ENCODE measurements at regions of chr1 and their contacts with region 1.

Region 1: GRCh38 chr1:112298558-112298957 is 97.5 kb upstream of the CTTNBP2NL start:
- DNase-seq: peak; percentile 76
- H3K4me3 Mint-ChIP-seq: no peak overlapping the region
- H3K27ac Mint-ChIP-seq: no peak overlapping the region
- H3K4me1 Mint-ChIP-seq: peaks cover 5% of the 10 kb centered on the region
- H3K27me3 Mint-ChIP-seq: no peaks in the 10 kb centered on the region
- CTCF ChIP-seq: peak; percentile 83

Region 2: DNA sequence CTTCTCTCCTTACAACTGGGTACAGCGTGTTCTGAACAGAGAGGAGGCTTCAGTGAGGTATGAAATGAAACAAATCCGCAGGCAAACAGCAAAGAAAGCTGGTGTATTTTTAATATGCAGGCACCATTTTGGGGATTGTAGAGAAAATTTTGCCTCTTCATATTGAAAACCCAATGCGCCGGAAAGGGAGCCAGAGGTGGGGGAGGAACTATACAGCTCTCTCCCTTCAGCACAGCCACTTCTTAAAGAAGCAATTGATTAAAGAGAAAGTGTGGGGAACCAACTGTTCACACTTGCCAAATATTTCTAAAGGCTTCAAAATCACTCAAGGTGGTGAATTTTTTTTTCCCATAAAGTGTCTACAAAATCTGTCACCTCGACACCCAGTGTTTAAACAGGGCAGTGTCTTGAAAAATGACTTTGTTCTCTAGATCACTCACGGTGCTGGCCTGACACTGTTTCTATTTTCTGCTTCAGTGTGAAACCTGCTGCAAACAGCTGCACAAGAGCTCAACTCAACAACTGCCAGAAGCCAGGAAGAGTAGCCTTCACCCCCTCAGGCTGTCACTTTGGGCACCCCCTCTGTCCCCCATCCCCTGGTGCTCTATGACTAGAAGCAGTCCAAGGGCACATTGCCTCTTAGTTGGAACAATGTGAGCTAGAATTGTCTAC is 26.3 kb before region 1 on chr1:
- CTCF ChIA-PET with region 1: interaction called, 12 read pairs
- POLR2A ChIA-PET with region 1: no interaction called
- intact Hi-C with region 1: no loop called
- DNase-seq: no peak
- H3K4me3 Mint-ChIP-seq: no peak overlapping the region
- H3K27ac Mint-ChIP-seq: no peak overlapping the region
- H3K4me1 Mint-ChIP-seq: no peaks in the 10 kb centered on the region
- H3K27me3 Mint-ChIP-seq: peaks cover 39% of the 10 kb centered on the region
- CTCF ChIP-seq: no peak

Region 3: GRCh38 chr1:112317140-112317539 is 18.6 kb after region 1 on chr1:
- CTCF ChIA-PET with region 1: interaction called, 58 read pairs
- POLR2A ChIA-PET with region 1: interaction called, 3 read pairs
- intact Hi-C with region 1: no loop called
- DNase-seq: no peak
- H3K4me3 Mint-ChIP-seq: no peak overlapping the region
- H3K27ac Mint-ChIP-seq: no peak overlapping the region
- H3K4me1 Mint-ChIP-seq: peaks cover 23% of the 10 kb centered on the region
- H3K27me3 Mint-ChIP-seq: no peaks in the 10 kb centered on the region
- CTCF ChIP-seq: no peak

Region 4: DNA sequence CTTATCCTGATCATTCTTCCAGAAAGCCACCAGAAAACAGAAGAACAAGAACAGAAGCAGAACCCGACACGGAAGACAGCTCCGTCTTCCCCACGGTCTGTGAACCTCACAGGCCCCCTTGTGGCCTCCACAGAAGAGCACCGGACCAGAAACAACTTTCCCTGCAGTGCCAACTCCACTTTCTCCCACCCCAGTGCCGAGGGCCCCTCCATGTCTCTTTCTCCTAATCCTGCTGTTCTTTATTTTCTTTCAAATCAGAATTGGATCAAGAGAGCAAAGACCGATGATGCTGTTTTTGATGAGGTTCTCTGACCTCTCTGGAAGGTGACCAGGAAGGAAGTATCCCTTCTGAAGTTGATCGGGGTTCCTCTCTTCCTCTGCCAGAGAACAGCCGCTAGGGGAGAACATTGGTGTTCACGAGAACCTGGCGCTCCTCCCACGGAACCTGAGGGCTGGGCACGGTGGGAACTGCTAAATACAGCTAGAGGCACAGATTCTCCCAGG is 38.5 kb after region 1 on chr1:
- CTCF ChIA-PET with region 1: interaction called, 93 read pairs
- POLR2A ChIA-PET with region 1: interaction called, 9 read pairs
- intact Hi-C with region 1: loop called (anchors 2 kb)
- DNase-seq: peak; percentile 55
- H3K4me3 Mint-ChIP-seq: no peak overlapping the region
- H3K27ac Mint-ChIP-seq: peak overlapping the region; percentile 36
- H3K4me1 Mint-ChIP-seq: peaks cover 26% of the 10 kb centered on the region
- H3K27me3 Mint-ChIP-seq: peaks cover 12% of the 10 kb centered on the region
- CTCF ChIP-seq: peak; percentile 79

Region 5: GRCh38 chr1:112358798-112359408 is 60.3 kb after region 1 on chr1:
- CTCF ChIA-PET with region 1: interaction called, 48 read pairs
- POLR2A ChIA-PET with region 1: no interaction called
- intact Hi-C with region 1: no loop called
- DNase-seq: peak; percentile 64
- H3K4me3 Mint-ChIP-seq: peak overlapping the region; percentile 62
- H3K27ac Mint-ChIP-seq: peak overlapping the region; percentile 72
- H3K4me1 Mint-ChIP-seq: peaks cover 31% of the 10 kb centered on the region
- H3K27me3 Mint-ChIP-seq: no peaks in the 10 kb centered on the region
- CTCF ChIP-seq: peak; percentile 82

Region 6: GRCh38 chr1:112544011-112544688 is 245.6 kb after region 1 on chr1:
- CTCF ChIA-PET with region 1: no interaction called
- POLR2A ChIA-PET with region 1: no interaction called
- intact Hi-C with region 1: no loop called
- DNase-seq: peak; percentile 82
- H3K4me3 Mint-ChIP-seq: no peak overlapping the region
- H3K27ac Mint-ChIP-seq: peak overlapping the region; percentile 13
- H3K4me1 Mint-ChIP-seq: peaks cover 16% of the 10 kb centered on the region
- H3K27me3 Mint-ChIP-seq: no peaks in the 10 kb centered on the region
- CTCF ChIP-seq: no peak

Measured in MCF 10A (cell line).